CD4-positive, alpha-beta T cell (primary cell): ENCODE measurements at regions of chr4 and their contacts with region 1.

Region 1: DNA sequence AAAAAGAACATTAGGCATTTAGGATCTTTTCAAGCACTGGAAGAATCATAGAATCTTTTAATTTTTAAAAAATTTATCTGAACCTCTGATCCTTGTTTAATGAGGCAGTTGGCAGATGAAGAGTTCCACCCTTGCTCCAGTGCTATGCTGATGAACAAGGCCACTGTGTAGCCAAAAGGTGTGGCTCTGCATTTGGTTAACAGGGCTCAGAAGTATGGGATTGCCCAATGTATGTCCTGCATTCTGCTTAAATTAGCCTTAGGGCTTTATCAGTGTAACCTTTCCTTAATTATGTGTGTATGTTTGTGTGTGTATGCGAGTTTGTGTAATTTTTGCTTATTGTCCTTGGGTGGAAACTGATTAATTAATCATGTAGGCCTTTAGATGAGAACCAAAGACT is 43.3 kb upstream of the PPM1K start:
- DNase-seq: no peak
- ATAC-seq: no peak
- H3K4me3 ChIP-seq: no peak overlapping the region
- H3K4me3 Mint-ChIP-seq: no peak overlapping the region
- H3K27ac ChIP-seq: no peak overlapping the region
- H3K27ac Mint-ChIP-seq: no peak overlapping the region
- H3K4me1 ChIP-seq: no peaks in the 10 kb centered on the region
- H3K4me1 Mint-ChIP-seq: no peaks in the 10 kb centered on the region
- H3K27me3 ChIP-seq: no peaks in the 10 kb centered on the region
- H3K27me3 Mint-ChIP-seq: no peaks in the 10 kb centered on the region
- CTCF ChIP-seq: no peak

Region 2: GRCh38 chr4:88291003-88291402 is 36.7 kb before region 1 on chr4:
- CTCF ChIA-PET with region 1: no interaction called
- POLR2A ChIA-PET with region 1: no interaction called
- intact Hi-C with region 1: loop called in 1 of 2 experiments (anchors 5 kb)
- DNase-seq: no peak
- ATAC-seq: no peak
- H3K4me3 ChIP-seq: no peak overlapping the region
- H3K4me3 Mint-ChIP-seq: no peak overlapping the region
- H3K27ac ChIP-seq: no peak overlapping the region
- H3K27ac Mint-ChIP-seq: no peak overlapping the region
- H3K4me1 ChIP-seq: no peaks in the 10 kb centered on the region
- H3K4me1 Mint-ChIP-seq: no peaks in the 10 kb centered on the region
- H3K27me3 ChIP-seq: no peaks in the 10 kb centered on the region
- H3K27me3 Mint-ChIP-seq: no peaks in the 10 kb centered on the region
- CTCF ChIP-seq: no peak